ENCODE measurements at regions of chr1 and their contacts with region 1.

Region 1: GRCh38 chr1:214123061-214123784 is 135.4 kb downstream of the PROX1 start:
- DNase-seq: peak; percentile 43 to 84 (median 61)
- H3K4me3 ChIP-seq: no peak overlapping the region
- H3K27ac ChIP-seq: no peak overlapping the region
- H3K4me1 ChIP-seq: no peaks in the 10 kb centered on the region
- H3K27me3 ChIP-seq: no peaks in the 10 kb centered on the region
- CTCF ChIP-seq: peak; percentile 39 to 83 (median 69)
- POLR2A ChIP-seq: no peak

Region 2: DNA sequence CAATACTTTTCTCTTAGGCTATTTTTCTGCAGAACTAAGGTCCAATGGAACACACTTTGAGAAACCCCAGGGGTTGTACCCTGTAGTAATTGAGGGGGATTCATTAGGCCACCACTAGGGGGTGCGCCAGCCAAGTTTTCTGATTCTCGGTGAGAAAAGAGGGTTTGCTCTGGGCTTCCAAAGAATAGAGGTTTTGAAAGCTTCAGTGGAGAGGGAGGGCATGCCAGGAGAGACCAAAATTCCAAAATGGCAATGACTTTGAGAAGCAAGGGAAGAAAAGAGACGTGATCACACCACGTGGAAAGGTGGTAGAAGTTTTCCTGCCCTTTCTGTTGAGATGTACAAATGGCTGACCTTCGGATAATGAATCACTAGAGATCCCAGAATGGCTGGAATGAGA is 748.9 kb before region 1 on chr1:
- intact Hi-C with region 1: loop called (anchors 5 to 10 kb)
- DNase-seq: peak; percentile 55 to 80 (median 67)
- H3K4me3 ChIP-seq: no peak overlapping the region
- H3K27ac ChIP-seq: no peak overlapping the region
- H3K4me1 ChIP-seq: no peaks in the 10 kb centered on the region
- H3K27me3 ChIP-seq: no peaks in the 10 kb centered on the region
- CTCF ChIP-seq: peak; percentile 66 to 89 (median 80)
- POLR2A ChIP-seq: no peak

Region 3: GRCh38 chr1:213564215-213564659 is 559.0 kb before region 1 on chr1:
- intact Hi-C with region 1: loop called in 1 of 2 experiments (anchors 10 kb)
- DNase-seq: peak in 2 of 7 donors; percentile 14 to 27
- H3K4me3 ChIP-seq: no peak overlapping the region
- H3K27ac ChIP-seq: no peak overlapping the region
- H3K4me1 ChIP-seq: no peaks in the 10 kb centered on the region
- H3K27me3 ChIP-seq: no peaks in the 10 kb centered on the region
- CTCF ChIP-seq: peak in 5 of 6 experiments; percentile 40 to 53 (median 44)
- POLR2A ChIP-seq: no peak

Region 4: GRCh38 chr1:213982672-213983492 is 140.3 kb before region 1 on chr1:
- intact Hi-C with region 1: loop called (anchors 5 to 10 kb)
- DNase-seq: peak in 5 of 7 donors; percentile 47 to 56 (median 50)
- H3K4me3 ChIP-seq: peak overlapping the region in 2 of 4 donors; percentile 21 to 55
- H3K27ac ChIP-seq: peak overlapping the region in 1 of 5 donors; percentile 34
- H3K4me1 ChIP-seq: peaks cover 0 to 27% of the 10 kb centered on the region in 2 donors
- H3K27me3 ChIP-seq: peaks cover 7% of the 10 kb centered on the region
- CTCF ChIP-seq: peak in 1 of 6 experiments; percentile 12
- POLR2A ChIP-seq: no peak

Region 5: DNA sequence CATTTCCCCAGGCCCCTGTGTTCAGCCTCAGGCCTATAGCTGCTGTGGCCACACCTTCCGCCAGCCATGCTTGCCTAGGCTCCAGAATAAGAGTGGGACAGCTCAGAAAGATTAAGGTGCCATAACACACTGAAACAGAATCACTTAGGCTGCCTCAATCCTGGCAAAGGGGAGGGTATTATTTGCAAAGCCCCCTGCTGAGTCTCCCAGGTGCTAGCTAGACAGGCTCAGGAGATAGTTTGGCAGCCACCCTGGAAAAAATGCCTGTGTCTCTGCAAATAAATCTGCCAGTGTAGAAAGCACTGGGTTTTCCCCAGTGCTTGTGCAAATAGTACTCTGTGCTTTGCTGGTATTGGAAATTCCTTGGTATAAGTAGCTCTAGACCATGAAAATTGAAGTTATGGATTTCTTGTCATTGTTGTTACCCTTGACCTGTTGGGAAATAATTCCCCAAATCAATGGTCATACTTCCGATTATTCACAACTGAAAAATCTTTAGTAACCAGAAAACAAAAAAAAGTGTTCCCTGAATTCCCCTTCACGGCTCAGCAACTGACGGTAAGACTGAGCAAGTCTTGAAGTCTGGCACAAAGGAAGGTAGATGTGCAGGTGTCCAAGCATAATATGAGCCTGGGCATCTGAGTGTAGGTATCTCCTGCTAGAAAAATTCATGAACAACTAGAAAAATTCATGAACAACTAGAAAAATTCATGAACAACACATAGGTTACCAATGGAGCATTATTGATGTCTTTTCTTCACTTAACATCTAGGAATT is 78.6 kb before region 1 on chr1:
- intact Hi-C with region 1: no loop called
- DNase-seq: peak in 5 of 7 donors; percentile 32 to 78 (median 37)
- H3K4me3 ChIP-seq: no peak overlapping the region
- H3K27ac ChIP-seq: peak overlapping the region in 2 of 5 donors; percentile 12 to 14
- H3K4me1 ChIP-seq: peaks cover 0 to 14% of the 10 kb centered on the region in 2 donors
- H3K27me3 ChIP-seq: no peaks in the 10 kb centered on the region
- CTCF ChIP-seq: no peak
- POLR2A ChIP-seq: no peak

Region 6: DNA sequence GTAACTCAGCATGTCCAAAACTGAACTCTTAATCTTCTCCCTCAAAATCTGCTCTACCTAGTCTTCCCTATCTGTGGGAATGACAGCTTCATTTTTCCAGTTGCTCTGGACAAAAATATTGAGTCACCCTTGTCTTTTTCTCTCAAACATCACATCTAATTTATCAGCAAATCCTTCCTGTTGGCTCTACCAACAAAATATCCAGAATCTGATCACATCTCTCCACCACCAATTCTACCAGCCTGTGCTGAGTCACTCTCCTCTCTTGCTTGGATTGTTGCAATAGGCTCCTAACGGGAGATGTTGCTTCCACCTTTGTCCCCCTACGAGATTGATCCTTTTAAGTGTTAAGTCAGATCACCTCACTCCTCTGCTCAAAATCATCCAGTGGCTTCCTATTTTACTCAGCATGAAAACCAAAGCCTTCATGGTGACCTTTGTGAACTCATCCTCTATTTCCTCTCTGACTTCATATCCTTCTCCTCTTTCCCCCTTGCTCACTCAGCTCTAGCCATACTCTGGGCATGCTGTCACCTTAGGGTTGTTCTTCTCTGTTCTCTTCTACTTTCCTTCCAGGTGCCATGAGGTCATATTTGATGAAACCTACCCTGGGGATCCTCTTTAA is 136.2 kb after region 1 on chr1:
- intact Hi-C with region 1: no loop called
- DNase-seq: no peak
- H3K4me3 ChIP-seq: no peak overlapping the region
- H3K27ac ChIP-seq: no peak overlapping the region
- H3K4me1 ChIP-seq: no peaks in the 10 kb centered on the region
- H3K27me3 ChIP-seq: peaks cover 23% of the 10 kb centered on the region
- CTCF ChIP-seq: no peak
- POLR2A ChIP-seq: no peak